Dorsolateral prefrontal cortex (tissue), 120 donors: ENCODE measurements at regions of chr5 and their contacts with region 1.

Region 1: GRCh38 chr5:155926031-155926430 is 400.9 kb upstream of the SGCD start:
- DNase-seq: no peak
- H3K4me3 ChIP-seq: no peak overlapping the region
- H3K27ac ChIP-seq: no peak overlapping the region
- H3K27me3 ChIP-seq: no peaks in the 10 kb centered on the region
- CTCF ChIP-seq: no peak

Region 2: GRCh38 chr5:155729684-155730059 is 196.4 kb before region 1 on chr5:
- intact Hi-C with region 1: loop called in 1 of 2 experiments (anchors 10 kb)
- DNase-seq: peak; percentile 12 to 84 (median 74)
- H3K4me3 ChIP-seq: peak overlapping the region; percentile 40 to 81 (median 64)
- H3K27ac ChIP-seq: peak overlapping the region in 31 of 59 donors; percentile 24 to 85 (median 66)
- H3K27me3 ChIP-seq: peaks cover 0 to 12% (median 0%) of the 10 kb centered on the region in 45 donors
- CTCF ChIP-seq: peak in 4 of 56 donors; percentile 4 to 12 (median 8)